ENCODE measurements at regions of chr11 and their contacts with region 1.

Region 1: DNA sequence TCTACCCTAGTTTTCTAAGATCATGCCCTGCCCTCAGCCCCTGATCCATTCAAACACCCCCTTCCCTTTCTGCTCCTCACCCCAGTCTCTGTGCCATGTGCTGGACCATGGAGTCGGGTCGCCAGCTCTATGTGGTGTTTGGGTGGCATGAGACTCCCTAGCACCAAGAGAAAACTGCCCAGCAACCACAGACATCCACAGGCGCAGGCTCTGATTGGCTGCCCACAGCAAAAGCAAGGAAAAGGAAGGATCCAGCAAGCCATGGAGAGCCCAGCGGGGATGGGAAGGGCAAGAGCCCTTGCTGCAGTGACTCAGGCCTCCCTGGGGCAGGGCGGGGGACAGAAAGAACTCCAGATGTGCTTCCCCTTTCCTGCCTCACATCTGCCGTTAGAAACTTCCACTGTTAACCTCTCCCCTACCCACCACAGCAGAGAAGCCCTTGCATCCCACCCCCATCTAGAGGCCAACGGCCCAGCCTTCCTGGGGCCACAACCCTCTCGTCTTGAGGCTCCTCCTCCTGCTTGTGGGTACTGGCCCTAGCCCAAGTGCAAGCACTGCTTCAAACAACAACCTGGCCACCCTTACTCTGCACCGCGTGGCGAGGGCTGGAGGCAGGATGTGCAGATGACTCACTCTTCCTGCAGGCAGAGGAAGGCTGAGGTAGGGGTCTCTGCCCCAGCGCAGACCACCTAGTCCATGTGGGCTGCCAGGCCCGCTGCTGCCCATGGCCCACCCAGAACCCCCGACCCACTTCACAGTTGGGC is 9.7 kb upstream of the AHNAK start:
- DNase-seq: peak; percentile 94
- H3K4me3 Mint-ChIP-seq: peak overlapping the region; percentile 59
- H3K27ac Mint-ChIP-seq: peak overlapping the region; percentile 96
- H3K4me1 Mint-ChIP-seq: peaks cover 96% of the 10 kb centered on the region
- H3K27me3 Mint-ChIP-seq: peaks cover 2% of the 10 kb centered on the region

Region 2: DNA sequence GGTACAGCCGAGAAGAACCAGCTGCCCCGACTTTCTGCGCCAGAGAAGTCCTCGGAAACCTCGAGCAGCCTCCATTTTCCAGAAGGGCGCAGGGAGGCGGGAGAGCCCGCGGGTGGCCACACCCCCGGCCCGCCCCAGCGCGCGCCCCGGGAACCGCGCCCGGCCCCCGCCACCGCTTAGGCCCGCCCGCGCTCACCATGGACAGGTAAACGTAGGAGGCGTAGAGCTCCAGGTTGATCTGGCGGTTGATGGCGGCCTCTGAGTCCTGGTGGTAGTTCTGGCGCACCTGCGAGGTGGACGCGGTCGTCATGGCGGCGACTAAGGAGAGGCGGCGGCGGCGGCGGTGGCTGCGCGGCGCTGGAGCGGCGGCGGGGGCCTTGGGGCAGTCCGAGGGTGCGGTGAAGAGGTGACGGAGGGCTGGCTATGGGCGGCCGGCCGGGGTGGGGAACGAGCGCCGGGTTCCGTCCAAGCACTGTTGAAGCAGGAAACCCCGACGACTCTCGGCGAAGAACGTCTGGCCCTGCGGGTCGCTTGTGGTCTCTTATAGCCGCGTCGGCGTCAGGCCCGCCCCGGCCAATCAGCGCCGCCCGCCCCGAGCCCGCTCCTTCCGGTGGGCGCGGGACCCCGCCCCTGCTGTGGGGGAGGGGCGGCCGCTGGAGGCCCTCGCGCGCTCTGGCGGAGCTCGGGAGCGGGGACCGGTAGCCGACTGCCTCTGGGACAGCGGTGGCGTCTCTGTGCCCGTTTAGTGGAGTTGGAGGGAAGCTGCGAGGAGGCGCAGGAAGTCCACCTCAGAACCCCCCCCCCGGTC is 589.0 kb before region 1 on chr11 and contains the start of gene FTH1:
- CTCF ChIA-PET with region 1: no interaction called
- POLR2A ChIA-PET with region 1: no interaction called
- intact Hi-C with region 1: loop called (anchors 5 kb)
- DNase-seq: peak; percentile 90
- H3K4me3 Mint-ChIP-seq: peak within 1 kb of the TSS; percentile 84
- H3K27ac Mint-ChIP-seq: peak within 1 kb of the TSS; percentile 93
- H3K4me1 Mint-ChIP-seq: peaks cover 68% of the 10 kb centered on the region
- H3K27me3 Mint-ChIP-seq: no peaks in the 10 kb centered on the region
- total RNA-seq, gene FTH1: 915 to 922 TPM

Region 3: GRCh38 chr11:62497132-62497915 is 59.0 kb before region 1 on chr11:
- CTCF ChIA-PET with region 1: interaction called, 4 read pairs
- POLR2A ChIA-PET with region 1: no interaction called
- intact Hi-C with region 1: loop called (anchors 1 kb)
- DNase-seq: peak; percentile 39
- H3K4me3 Mint-ChIP-seq: no peak overlapping the region
- H3K27ac Mint-ChIP-seq: no peak overlapping the region
- H3K4me1 Mint-ChIP-seq: peaks cover 2% of the 10 kb centered on the region
- H3K27me3 Mint-ChIP-seq: no peaks in the 10 kb centered on the region

Region 4: DNA sequence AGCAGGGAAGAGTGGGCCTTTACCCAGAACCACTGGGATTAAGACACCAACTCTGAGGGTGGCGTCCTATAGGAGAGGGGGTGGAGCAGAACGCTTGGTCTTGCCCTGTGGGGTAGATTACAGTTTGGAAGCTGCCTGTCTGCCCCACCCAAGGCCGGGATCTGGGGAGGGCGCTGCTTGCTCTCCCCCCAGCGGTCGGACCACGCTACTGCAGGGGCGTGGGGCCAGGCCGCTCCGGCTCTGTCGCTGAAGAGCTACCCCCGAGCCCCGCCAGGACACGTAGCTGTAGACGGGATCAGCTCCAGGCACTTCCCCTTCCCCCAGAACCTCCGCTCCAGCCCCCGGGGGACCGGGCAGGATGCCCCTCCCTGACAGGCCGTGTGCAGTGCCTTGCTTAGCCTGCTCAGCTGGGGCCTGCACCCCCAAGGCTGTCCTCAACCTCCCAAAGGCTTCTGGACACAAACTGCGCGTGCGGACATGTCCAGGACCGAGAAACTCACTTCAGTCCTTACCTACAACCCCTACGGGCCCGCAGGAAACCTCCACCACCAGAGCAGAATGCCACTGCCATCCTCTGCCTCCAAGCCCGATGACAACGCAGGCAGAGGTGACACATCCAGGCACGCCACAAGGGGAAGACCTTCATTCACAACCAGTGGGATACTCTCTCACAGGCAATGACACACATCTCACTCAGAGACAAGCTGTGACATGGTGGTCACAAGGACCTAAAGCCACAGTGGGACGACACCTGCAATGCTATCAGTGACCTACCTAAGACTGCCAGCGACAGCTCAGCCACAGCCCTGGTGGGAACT is 13.3 kb before region 1 on chr11:
- CTCF ChIA-PET with region 1: interaction called, 172 read pairs
- POLR2A ChIA-PET with region 1: interaction called, 188 read pairs
- intact Hi-C with region 1: loop called (anchors 1 kb)
- DNase-seq: peak; percentile 88
- H3K4me3 Mint-ChIP-seq: peak overlapping the region; percentile 93
- H3K27ac Mint-ChIP-seq: peak overlapping the region; percentile 83
- H3K4me1 Mint-ChIP-seq: peaks cover 75% of the 10 kb centered on the region
- H3K27me3 Mint-ChIP-seq: no peaks in the 10 kb centered on the region

Region 5: GRCh38 chr11:62567018-62567633 is 10.8 kb after region 1 on chr11:
- CTCF ChIA-PET with region 1: interaction called, 7 read pairs
- POLR2A ChIA-PET with region 1: interaction called, 10 read pairs
- intact Hi-C with region 1: loop called (anchors 2 kb)
- DNase-seq: no peak
- H3K4me3 Mint-ChIP-seq: no peak overlapping the region
- H3K27ac Mint-ChIP-seq: peak overlapping the region; percentile 85
- H3K4me1 Mint-ChIP-seq: peaks cover 62% of the 10 kb centered on the region
- H3K27me3 Mint-ChIP-seq: no peaks in the 10 kb centered on the region

Region 6: GRCh38 chr11:62573592-62574362 is 17.5 kb after region 1 on chr11 and contains the start of gene EEF1G:
- CTCF ChIA-PET with region 1: interaction called, 7 read pairs
- POLR2A ChIA-PET with region 1: interaction called, 10 read pairs
- intact Hi-C with region 1: loop called (anchors 1 kb)
- DNase-seq: peak; percentile 99
- H3K4me3 Mint-ChIP-seq: peak within 1 kb of the TSS; percentile 93
- H3K27ac Mint-ChIP-seq: peak within 1 kb of the TSS; percentile 96
- H3K4me1 Mint-ChIP-seq: peaks cover 50% of the 10 kb centered on the region
- H3K27me3 Mint-ChIP-seq: no peaks in the 10 kb centered on the region
- total RNA-seq, gene EEF1G: 1,956 to 1,989 TPM

Region 7: DNA sequence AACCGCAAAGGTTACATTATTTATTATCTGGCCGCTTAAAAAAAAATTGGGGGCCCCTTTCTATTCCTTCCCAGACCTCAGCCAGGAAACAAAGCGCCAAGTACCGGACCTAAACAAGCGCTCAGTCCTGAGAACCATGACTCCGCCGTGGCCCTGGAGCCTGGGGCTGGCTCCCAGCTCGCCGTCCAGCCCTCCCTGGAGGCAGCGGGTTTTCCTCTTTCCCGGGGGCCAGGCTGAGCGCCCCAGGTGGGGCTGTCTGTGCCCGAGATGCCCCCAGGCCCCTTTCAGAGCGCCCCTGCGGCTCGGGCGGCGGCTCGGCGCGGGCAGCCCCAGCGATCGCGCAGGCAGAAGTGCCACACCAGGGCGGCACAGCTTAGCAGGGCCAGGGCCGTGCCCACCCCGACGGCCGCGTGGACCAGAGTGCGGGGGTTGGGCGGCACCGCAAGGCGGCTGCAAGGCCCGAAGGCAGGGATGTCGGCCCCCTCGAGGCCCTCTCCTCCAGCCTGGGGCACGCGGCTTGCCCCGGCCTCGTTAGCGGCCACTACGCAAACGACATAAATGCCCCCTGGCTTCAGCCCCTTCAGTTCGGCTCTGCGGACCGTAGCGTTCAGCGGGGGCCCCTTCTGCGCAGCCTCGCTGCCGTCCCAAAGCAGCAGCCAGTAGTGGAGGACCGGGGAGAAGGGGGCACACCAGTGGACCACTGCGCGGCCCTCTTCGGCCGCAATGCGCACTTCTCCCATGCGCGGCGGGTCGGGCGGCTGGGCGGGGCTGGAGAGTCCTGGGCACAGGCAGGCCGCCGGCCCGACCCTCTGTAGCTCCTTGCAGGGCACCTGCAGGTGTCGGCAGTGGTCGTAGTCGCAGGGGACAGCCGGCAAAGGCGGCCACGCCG is 131.5 kb after region 1 on chr11:
- CTCF ChIA-PET with region 1: no interaction called
- POLR2A ChIA-PET with region 1: no interaction called
- intact Hi-C with region 1: no loop called
- DNase-seq: no peak
- H3K4me3 Mint-ChIP-seq: no peak overlapping the region
- H3K27ac Mint-ChIP-seq: no peak overlapping the region
- H3K4me1 Mint-ChIP-seq: no peaks in the 10 kb centered on the region
- H3K27me3 Mint-ChIP-seq: peaks cover 8% of the 10 kb centered on the region

Measured in activated CD4-positive, alpha-beta memory T cell treated with anti-CD3 and anti-CD28 coated beads for 36 hours (primary cell).